Uterus (tissue), 4 donors: ENCODE measurements at regions of chr1 and their contacts with region 1.

Region 1: DNA sequence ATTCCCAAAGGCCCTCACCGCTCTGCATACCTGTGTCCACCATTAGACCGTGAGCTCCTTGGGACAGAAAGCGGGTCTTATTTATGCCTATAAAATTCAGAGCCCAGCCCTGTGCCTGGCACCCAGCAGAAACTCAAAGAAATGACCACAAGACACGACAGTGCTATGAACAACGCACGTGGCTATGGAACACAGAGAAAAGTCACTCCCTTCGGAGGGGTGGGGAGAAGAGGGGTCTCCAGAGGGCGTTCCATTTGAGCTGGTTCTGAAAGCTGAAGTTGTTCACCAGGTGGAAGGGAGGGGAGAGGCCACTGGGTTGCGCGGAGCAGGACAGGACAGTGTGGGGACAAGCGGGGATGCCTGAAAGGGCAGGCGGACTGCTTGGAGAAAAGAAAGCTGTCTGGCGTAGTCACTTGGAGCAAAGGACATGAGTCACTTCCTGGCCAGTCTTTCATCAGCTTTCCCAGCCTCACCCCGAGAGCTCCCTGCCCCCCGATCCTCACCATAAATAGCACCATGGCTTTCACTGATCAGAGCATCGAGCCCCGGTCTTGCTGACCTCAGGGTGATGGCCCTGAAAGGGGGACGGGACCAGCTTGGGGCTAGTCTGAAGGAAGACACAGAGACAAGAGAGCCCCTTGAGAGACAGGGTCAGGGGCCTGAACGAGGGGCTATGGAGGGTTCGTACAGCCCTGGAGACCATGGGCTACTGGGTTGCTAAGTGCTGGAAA is 28.5 kb downstream of the ECE1 start:
- DNase-seq: peak; percentile 70 to 82
- H3K4me3 ChIP-seq: no peak overlapping the region
- H3K27ac ChIP-seq: peak overlapping the region; percentile 84 to 88
- H3K4me1 ChIP-seq: peaks cover 0 to 30% of the 10 kb centered on the region in 2 donors
- H3K27me3 ChIP-seq: no peaks in the 10 kb centered on the region
- CTCF ChIP-seq: peak in 1 of 4 experiments; percentile 2
- POLR2A ChIP-seq: peak; percentile 10 to 26

Region 2: GRCh38 chr1:21344750-21345443 is 83.2 kb after region 1 on chr1:
- intact Hi-C with region 1: loop called (anchors 5 kb)
- DNase-seq: no peak
- H3K4me3 ChIP-seq: peak overlapping the region; percentile 46 to 98
- H3K27ac ChIP-seq: peak overlapping the region; percentile 88 to 91
- H3K4me1 ChIP-seq: peaks cover 11 to 19% of the 10 kb centered on the region in 2 donors
- H3K27me3 ChIP-seq: no peaks in the 10 kb centered on the region
- CTCF ChIP-seq: no peak
- POLR2A ChIP-seq: no peak